PC-3 (cell line): ENCODE measurements at regions of chr3 and their contacts with region 1.

Region 1: DNA sequence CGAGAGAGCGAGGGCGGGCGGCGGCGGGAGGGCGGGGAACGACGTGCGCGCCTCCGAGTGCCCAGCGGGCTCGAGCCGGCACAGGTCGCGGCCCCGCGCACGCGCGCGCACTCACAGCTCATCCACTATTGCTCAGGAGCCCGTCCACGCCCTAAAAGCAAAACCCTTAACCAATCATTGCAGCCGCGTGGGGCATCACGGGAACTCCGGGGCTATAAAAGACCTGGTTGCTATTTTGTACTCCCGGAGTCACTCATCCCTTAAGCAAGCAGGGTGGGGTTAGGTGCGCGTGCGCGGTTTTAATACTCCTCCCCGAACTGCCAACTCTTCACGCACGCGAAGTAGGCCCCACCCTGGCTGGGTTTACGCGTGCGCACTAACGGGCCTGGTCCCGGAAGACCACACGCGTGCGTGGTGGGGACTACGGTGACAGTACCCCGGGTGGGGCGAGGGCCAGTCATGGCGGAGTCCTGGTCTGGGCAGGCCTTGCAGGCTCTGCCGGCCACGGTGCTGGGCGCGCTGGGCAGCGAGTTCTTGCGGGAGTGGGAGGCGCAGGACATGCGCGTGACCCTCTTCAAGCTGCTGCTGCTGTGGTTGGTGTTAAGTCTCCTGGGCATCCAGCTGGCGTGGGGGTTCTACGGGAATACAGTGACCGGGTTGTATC is at the starts of genes RHOA and TCTA:
- DNase-seq: peak; percentile 100
- ATAC-seq: peak; percentile 93
- H3K4me3 ChIP-seq: peak within 1 kb of the TSS; percentile 85
- H3K27ac ChIP-seq: peak within 1 kb of the TSS; percentile 66
- H3K4me1 ChIP-seq: peaks cover 32% of the 10 kb centered on the region
- H3K27me3 ChIP-seq: no peaks in the 10 kb centered on the region
- CTCF ChIP-seq: no peak
- total RNA-seq, gene RHOA: 278 and 292 TPM in 2 replicates
- total RNA-seq, gene TCTA: 23.7 and 25.4 TPM in 2 replicates

Region 2: GRCh38 chr3:49133226-49133951 is 278.7 kb before region 1 on chr3:
- CTCF ChIA-PET with region 1: no interaction called
- POLR2A ChIA-PET with region 1: no interaction called
- intact Hi-C with region 1: loop called (anchors 5 kb)
- DNase-seq: peak; percentile 90
- ATAC-seq: peak; percentile 76
- H3K4me3 ChIP-seq: peak overlapping the region; percentile 91
- H3K27ac ChIP-seq: peak overlapping the region; percentile 93
- H3K4me1 ChIP-seq: peaks cover 12% of the 10 kb centered on the region
- H3K27me3 ChIP-seq: no peaks in the 10 kb centered on the region
- CTCF ChIP-seq: no peak

Region 3: GRCh38 chr3:49351521-49352011 is 60.5 kb before region 1 on chr3:
- CTCF ChIA-PET with region 1: no interaction called
- POLR2A ChIA-PET with region 1: no interaction called
- intact Hi-C with region 1: loop called (anchors 2 kb)
- DNase-seq: peak; percentile 85
- ATAC-seq: peak; percentile 83
- H3K4me3 ChIP-seq: peak overlapping the region; percentile 3; the same call in 1 of the 2 replicates
- H3K27ac ChIP-seq: peak overlapping the region; percentile 66
- H3K4me1 ChIP-seq: peaks cover 36% of the 10 kb centered on the region
- H3K27me3 ChIP-seq: no peaks in the 10 kb centered on the region
- CTCF ChIP-seq: no peak

Region 4: DNA sequence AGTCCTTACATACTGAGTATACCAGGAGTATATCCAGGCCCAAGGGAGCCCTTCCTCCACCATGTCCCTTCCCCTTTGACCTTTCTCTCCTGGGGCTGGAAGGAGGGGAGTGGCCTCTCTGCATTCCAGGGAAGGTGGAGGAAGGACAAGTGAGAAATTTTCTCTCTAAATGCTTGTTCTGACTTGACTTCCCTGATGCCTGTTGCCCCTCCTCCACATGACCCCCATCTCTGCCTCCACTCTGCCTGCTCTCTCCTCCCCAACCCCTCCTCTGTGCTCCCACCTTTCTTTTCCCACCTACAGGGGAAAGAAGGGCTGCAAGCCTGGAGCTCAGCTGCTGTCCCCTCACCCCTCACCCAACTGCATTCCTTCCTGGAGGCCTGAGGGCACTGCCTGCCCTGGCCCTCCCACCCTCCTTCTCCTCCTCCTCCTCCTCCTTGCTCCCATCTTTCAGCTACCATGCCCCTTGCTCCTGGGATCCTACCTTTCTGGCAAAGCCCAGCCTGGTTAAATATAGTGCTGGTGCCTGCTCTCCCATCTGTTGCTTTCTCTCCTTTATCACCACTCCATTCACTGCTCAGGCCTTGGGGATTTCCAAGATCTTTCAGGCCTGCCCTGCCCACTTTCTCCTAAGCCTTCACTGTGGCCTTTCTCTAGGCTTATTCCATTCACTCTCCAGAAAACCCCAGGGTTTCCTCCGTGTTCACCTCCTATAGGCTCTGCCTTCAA is 49.5 kb after region 1 on chr3:
- CTCF ChIA-PET with region 1: no interaction called
- POLR2A ChIA-PET with region 1: no interaction called
- intact Hi-C with region 1: no loop called
- DNase-seq: peak; percentile 57
- ATAC-seq: peak; percentile 74
- H3K4me3 ChIP-seq: no peak overlapping the region
- H3K27ac ChIP-seq: peak overlapping the region; percentile 61
- H3K4me1 ChIP-seq: peaks cover 17% of the 10 kb centered on the region
- H3K27me3 ChIP-seq: no peaks in the 10 kb centered on the region
- CTCF ChIP-seq: no peak

Region 5: DNA sequence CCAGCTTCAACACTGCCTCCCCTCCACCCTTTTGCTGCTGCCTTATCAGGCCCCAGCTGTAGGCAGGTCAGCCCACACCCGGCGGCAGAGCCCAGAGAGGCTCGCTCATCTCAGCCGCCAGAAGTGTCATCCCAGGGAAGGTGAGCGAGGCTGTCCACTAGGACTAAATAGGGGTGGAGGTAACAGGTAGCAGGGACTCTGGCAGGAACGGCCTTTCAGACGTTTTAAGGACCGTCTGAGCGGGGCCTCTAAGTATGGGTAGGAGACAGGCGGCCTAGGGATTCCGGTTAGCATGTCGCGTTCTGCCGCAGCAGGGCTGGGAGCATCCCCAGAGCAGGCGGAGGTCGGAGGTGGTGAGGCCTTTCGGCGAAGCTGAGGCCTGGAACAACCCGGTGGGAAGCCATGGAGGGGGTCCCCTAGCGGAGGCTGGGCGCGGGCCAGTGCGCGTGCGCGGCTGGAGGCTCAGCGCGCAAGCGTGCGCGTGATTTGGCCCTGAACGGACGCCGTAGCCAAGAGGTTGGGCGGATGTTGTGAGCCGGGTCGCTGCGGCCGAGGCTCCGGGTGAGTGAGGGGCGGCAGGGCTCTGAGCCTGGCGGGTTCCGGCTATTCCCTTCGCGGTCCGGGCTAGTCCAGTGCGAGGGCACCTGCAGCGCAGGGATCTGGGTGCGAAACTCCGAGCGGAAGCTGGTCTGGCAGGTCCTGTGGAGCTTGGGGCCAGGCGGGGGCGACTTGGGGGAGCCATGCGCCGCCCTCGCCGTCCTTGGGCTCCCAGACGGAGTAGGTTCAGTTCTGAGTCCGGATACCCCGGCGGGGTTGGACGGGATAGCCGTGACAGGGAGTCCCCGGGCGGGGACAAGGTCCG is 277.2 kb after region 1 on chr3 and contains the starts of genes MST1 and RNF123:
- CTCF ChIA-PET with region 1: no interaction called
- POLR2A ChIA-PET with region 1: no interaction called
- intact Hi-C with region 1: no loop called
- DNase-seq: peak; percentile 90
- ATAC-seq: peak; percentile 69
- H3K4me3 ChIP-seq: peak within 1 kb of the TSS; percentile 96
- H3K27ac ChIP-seq: 0 out of 2 replicates have a peak within 1 kb of the TSS, but pooled peaks have one; percentile 0
- H3K4me1 ChIP-seq: peaks cover 9% of the 10 kb centered on the region; the same call in 1 of the 2 replicates
- H3K27me3 ChIP-seq: no peaks in the 10 kb centered on the region
- CTCF ChIP-seq: peak; percentile 41
- total RNA-seq, gene MST1: 1.7 and 2.8 TPM in 2 replicates
- total RNA-seq, gene RNF123: 38.6 and 43.0 TPM in 2 replicates